ENCODE measurements at regions of chr15 and their contacts with region 1.

Region 1: GRCh38 chr15:92808978-92809879 is 90.9 kb upstream of the CHD2 start:
- DNase-seq: peak; percentile 95
- H3K4me3 Mint-ChIP-seq: peak overlapping the region; percentile 72
- H3K27ac Mint-ChIP-seq: peak overlapping the region; percentile 96
- H3K4me1 Mint-ChIP-seq: peaks cover 28% of the 10 kb centered on the region
- H3K27me3 Mint-ChIP-seq: no peaks in the 10 kb centered on the region
- CTCF ChIP-seq: peak; percentile 92

Region 2: DNA sequence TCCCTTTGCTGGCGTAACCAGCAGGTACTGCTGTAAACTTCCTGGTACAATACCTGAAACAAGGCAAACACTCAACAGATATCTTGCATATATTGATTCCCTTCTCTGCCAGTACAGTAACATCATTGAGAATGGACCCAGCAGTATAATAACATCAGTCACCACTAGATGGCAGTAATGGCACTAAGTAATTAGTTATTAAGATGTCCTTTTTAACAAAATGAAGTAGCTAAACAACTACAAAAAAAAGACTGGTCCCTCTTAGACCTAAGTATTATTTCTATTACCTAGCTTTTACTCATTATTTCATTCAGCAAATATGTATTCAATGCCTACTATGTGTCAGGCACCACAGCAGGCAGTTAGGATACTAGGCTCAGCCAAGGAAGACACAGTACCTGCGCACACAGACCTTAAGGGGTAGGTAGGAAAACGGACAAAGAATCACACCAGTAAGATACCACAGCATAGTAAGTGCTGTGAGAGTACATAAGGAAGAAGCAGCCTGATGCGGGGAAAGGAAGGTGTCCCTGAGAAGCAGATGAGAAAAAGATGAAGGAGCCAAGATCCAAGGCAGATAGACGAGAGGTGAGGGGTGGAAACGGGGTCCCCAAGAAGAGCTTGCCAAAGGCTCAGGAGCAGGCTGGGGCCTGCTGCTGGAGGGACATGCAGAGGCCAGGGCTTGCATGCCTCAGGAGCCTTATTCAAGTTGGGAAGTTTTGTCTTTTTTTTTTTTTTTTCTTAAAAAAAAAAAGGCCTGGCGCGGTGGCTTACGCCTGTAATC is 11.9 kb before region 1 on chr15:
- CTCF ChIA-PET with region 1: interaction called, 15 read pairs
- POLR2A ChIA-PET with region 1: interaction called, 19 read pairs
- intact Hi-C with region 1: no loop called
- DNase-seq: peak; percentile 76
- H3K4me3 Mint-ChIP-seq: no peak overlapping the region
- H3K27ac Mint-ChIP-seq: peak overlapping the region; percentile 84
- H3K4me1 Mint-ChIP-seq: peaks cover 18% of the 10 kb centered on the region
- H3K27me3 Mint-ChIP-seq: no peaks in the 10 kb centered on the region
- CTCF ChIP-seq: peak; percentile 53

Region 3: DNA sequence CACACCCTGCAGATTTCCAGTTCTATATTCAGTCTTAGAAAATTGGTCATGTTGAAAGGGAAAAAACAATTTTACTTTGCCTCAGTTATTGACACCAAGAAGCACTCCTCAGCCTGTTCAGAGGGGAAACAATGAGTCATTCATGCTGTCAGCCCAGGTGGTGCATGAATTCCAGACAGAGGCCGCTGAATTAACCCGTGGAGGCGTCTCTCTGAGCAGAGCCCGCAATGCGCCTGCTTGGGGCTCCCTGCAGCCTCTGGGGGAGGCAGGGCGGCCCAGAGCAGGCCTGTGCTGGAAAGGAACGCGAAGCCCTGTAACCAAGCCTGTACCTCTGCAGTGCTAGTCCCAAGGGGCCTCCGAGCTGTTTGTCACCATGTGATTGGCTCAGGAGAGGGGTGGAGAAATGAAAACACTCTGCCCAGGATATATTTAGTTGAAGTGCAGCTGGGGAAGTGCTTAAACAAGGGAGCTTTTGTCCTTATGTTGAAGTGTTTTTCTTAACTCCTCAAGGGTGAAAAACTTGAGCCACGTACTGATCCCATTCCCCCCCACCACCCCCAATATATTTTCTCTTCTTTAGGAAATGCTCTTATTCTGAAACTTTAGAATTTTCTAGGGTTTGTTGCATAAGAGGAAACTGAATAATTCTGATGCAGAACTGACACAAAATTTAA is 22.6 kb after region 1 on chr15:
- CTCF ChIA-PET with region 1: interaction called, 6 read pairs
- POLR2A ChIA-PET with region 1: interaction called, 204 read pairs
- intact Hi-C with region 1: no loop called
- DNase-seq: peak; percentile 95
- H3K4me3 Mint-ChIP-seq: peak overlapping the region; percentile 60
- H3K27ac Mint-ChIP-seq: peak overlapping the region; percentile 95
- H3K4me1 Mint-ChIP-seq: peaks cover 5% of the 10 kb centered on the region
- H3K27me3 Mint-ChIP-seq: no peaks in the 10 kb centered on the region
- CTCF ChIP-seq: no peak

Region 4: DNA sequence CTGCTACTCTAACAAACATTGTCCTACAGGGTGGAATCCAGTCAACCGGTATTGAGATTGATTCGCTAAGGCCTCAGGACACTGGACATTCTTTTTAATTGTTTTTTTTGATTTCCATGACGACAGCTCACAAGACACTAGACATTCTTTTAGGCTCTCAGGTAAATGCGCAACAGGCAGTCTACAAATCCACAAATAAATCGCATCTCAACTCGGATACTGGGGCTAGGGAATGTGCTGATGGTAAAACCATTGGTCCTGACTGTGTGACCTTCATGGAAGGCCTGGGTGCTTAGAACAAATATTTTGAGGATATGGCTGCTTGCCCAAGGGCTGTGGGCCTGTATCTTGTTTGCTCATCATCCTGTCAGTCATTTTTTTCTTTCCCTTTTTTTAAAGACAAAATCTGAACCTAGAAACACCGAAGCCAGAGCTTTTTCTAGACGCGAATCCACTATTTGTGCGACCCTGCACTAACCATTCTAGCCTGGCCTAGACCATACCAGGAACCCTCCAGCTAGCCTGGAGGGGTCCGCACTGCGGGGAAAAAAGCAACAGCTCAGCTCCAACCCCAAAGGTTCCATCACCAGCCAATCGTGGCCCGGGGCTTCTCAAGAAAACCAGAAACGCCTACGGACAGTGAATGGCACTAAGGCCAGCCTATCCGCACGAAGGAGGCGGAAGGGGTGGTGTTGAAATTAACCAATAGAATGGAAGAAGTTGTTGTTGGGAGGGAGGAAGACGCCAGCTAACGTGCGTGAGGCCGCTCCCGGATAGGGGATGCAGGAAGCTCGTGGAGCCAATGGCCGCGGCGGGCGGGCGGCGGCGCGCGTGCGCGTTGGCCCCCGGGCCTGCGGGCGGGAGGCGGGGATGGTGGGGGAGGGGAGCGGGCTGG is 72.8 kb after region 1 on chr15:
- CTCF ChIA-PET with region 1: interaction called, 11 read pairs
- POLR2A ChIA-PET with region 1: interaction called, 1,025 read pairs
- intact Hi-C with region 1: loop called (anchors 1 kb)
- DNase-seq: peak; percentile 99
- H3K4me3 Mint-ChIP-seq: peak overlapping the region; percentile 87
- H3K27ac Mint-ChIP-seq: peak overlapping the region; percentile 98
- H3K4me1 Mint-ChIP-seq: peaks cover 28% of the 10 kb centered on the region
- H3K27me3 Mint-ChIP-seq: no peaks in the 10 kb centered on the region
- CTCF ChIP-seq: no peak

Region 5: DNA sequence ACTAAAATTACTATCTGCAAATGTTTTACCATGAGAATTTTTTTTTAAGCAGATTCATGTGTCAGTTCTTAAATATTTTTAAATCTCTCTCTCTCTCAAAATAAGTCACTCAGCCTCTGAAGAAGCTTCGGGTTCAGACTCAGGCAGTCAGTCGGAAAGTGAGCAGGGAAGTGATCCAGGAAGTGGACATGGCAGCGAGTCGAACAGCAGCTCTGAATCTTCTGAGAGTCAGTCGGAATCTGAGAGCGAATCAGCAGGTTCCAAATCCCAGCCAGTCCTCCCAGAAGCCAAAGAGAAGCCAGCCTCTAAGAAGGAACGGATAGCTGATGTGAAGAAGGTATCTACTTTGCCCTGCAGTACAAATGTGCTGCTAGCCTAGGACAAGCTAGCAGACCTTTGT is 115.0 kb after region 1 on chr15:
- CTCF ChIA-PET with region 1: interaction called, 5 read pairs
- POLR2A ChIA-PET with region 1: interaction called, 266 read pairs
- intact Hi-C with region 1: no loop called
- DNase-seq: no peak
- H3K4me3 Mint-ChIP-seq: no peak overlapping the region
- H3K27ac Mint-ChIP-seq: peak overlapping the region; percentile 93
- H3K4me1 Mint-ChIP-seq: peaks cover 39% of the 10 kb centered on the region
- H3K27me3 Mint-ChIP-seq: no peaks in the 10 kb centered on the region
- CTCF ChIP-seq: no peak

Region 6: DNA sequence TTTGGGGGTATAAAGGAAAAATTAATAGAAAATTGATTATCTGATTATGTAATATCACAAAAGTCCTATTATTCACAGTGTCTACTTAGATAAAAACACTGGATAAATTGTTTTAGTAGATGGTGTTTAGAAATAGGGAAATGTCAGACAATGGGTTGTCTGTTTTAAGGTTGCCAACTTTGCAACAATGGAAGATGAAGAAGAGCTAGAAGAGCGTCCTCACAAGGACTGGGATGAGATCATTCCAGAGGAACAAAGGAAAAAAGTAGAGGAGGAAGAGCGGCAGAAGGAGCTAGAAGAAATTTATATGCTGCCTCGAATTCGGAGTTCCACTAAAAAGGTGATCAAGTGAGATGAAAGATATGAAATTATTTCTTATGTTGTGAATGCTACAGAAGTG is 174.9 kb after region 1 on chr15:
- CTCF ChIA-PET with region 1: no interaction called
- POLR2A ChIA-PET with region 1: interaction called, 11 read pairs
- intact Hi-C with region 1: no loop called
- DNase-seq: no peak
- H3K4me3 Mint-ChIP-seq: no peak overlapping the region
- H3K27ac Mint-ChIP-seq: peak overlapping the region; percentile 5
- H3K4me1 Mint-ChIP-seq: no peaks in the 10 kb centered on the region
- H3K27me3 Mint-ChIP-seq: no peaks in the 10 kb centered on the region
- CTCF ChIP-seq: no peak

Measured in MCF 10A (cell line).